PC-3 (cell line): ENCODE measurements at regions of chr14 and their contacts with region 1.

Region 1: GRCh38 chr14:36553656-36554260 is 28.7 kb downstream of the NKX2-8 start:
- DNase-seq: peak; percentile 72
- ATAC-seq: peak; percentile 75
- H3K4me3 ChIP-seq: no peak overlapping the region
- H3K27ac ChIP-seq: no peak overlapping the region
- H3K4me1 ChIP-seq: no peaks in the 10 kb centered on the region
- H3K27me3 ChIP-seq: peaks cover 13% of the 10 kb centered on the region
- CTCF ChIP-seq: peak; percentile 79

Region 2: DNA sequence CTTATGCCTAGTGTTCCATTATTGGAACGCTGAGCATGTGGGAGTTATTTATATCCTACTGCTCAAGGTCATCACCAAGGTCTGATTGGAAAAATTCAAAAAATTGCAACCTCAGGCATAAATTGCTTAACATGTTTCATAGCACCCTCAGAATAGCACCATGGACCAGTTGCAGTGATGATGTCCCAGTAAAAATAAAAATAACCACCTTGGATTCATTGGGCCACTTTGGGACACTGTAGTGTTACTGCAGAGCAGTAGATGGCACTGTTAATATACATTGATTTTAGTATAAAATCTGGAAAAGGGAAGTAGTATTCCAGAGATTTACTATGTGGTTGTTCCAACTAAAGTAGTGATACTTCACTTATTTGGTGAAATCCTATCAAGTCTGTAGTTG is 346.3 kb before region 1 on chr14:
- CTCF ChIA-PET with region 1: no interaction called
- POLR2A ChIA-PET with region 1: no interaction called
- intact Hi-C with region 1: loop called (anchors 2 kb)
- DNase-seq: peak; percentile 51
- ATAC-seq: peak; percentile 85
- H3K4me3 ChIP-seq: no peak overlapping the region
- H3K27ac ChIP-seq: no peak overlapping the region
- H3K4me1 ChIP-seq: no peaks in the 10 kb centered on the region
- H3K27me3 ChIP-seq: peaks cover 44% of the 10 kb centered on the region
- CTCF ChIP-seq: peak; percentile 75

Region 3: DNA sequence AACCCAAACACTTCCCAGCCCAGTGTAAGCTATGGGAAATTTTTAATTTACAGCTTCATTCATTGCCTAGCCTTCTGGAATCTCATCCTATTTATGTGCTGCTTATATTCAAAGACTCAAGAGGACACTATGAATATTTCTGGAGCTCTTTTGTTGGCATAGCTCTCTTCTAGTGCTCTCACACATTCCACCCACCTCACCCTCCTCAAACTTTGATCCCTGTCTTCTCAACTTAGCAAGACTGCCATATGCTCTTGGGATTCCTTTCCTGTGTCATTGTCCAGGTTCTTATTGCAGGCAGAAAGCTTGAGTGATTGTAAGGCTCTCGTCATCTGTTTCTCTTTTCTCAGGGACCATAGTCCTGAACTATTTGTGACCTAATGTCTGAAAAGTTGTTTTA is 15.7 kb before region 1 on chr14:
- CTCF ChIA-PET with region 1: no interaction called
- POLR2A ChIA-PET with region 1: no interaction called
- intact Hi-C with region 1: no loop called
- DNase-seq: no peak
- ATAC-seq: no peak
- H3K4me3 ChIP-seq: no peak overlapping the region
- H3K27ac ChIP-seq: no peak overlapping the region
- H3K4me1 ChIP-seq: no peaks in the 10 kb centered on the region
- H3K27me3 ChIP-seq: peaks cover 66% of the 10 kb centered on the region
- CTCF ChIP-seq: no peak

Region 4: GRCh38 chr14:36591482-36591881 is 37.7 kb after region 1 on chr14:
- CTCF ChIA-PET with region 1: interaction called, 11 read pairs
- POLR2A ChIA-PET with region 1: no interaction called
- intact Hi-C with region 1: no loop called
- DNase-seq: peak; percentile 9
- ATAC-seq: no peak
- H3K4me3 ChIP-seq: no peak overlapping the region
- H3K27ac ChIP-seq: no peak overlapping the region
- H3K4me1 ChIP-seq: no peaks in the 10 kb centered on the region
- H3K27me3 ChIP-seq: peaks cover 95% of the 10 kb centered on the region
- CTCF ChIP-seq: no peak

Region 5: DNA sequence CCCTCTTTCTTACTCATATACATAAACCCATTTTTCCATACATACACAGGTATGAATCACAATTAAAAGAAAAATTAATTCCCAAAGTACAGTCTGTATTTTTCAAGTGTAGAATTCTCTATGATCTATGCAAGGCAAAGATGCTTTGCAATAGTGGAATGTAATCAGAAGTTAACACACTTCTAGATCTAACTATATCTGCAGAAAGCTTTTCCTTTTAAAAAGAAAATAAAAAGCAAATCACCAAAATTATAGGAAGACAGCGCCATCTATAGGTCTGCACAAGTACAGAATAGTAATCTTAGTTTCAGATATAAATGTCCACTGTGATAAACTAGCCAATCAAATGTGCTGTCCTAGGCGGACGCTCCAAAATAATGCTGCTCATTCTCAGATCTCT is 596.7 kb after region 1 on chr14:
- CTCF ChIA-PET with region 1: interaction called, 18 read pairs
- POLR2A ChIA-PET with region 1: no interaction called
- intact Hi-C with region 1: loop called (anchors 1 kb)
- DNase-seq: peak; percentile 76
- ATAC-seq: peak; percentile 82
- H3K4me3 ChIP-seq: no peak overlapping the region
- H3K27ac ChIP-seq: no peak overlapping the region
- H3K4me1 ChIP-seq: peaks cover 5% of the 10 kb centered on the region
- H3K27me3 ChIP-seq: no peaks in the 10 kb centered on the region
- CTCF ChIP-seq: peak; percentile 90